Activated CD4-positive, alpha-beta T cell treated with anti-CD3 and anti-CD28 coated beads, Interleukin-2, amount 10 ng/mL, durations not matched to agents 7 days and 5 days (primary cell): ENCODE measurements at regions of chr7 and their contacts with region 1.

Region 1: GRCh38 chr7:141737834-141738591 is at the start of gene SSBP1:
- DNase-seq: peak; percentile 94
- H3K4me3 Mint-ChIP-seq: peak within 1 kb of the TSS; percentile 92
- H3K27ac Mint-ChIP-seq: peak within 1 kb of the TSS; percentile 96
- H3K4me1 Mint-ChIP-seq: peaks cover 38% of the 10 kb centered on the region
- H3K27me3 Mint-ChIP-seq: no peaks in the 10 kb centered on the region
- total RNA-seq, gene SSBP1: 109 to 127 TPM

Region 2: DNA sequence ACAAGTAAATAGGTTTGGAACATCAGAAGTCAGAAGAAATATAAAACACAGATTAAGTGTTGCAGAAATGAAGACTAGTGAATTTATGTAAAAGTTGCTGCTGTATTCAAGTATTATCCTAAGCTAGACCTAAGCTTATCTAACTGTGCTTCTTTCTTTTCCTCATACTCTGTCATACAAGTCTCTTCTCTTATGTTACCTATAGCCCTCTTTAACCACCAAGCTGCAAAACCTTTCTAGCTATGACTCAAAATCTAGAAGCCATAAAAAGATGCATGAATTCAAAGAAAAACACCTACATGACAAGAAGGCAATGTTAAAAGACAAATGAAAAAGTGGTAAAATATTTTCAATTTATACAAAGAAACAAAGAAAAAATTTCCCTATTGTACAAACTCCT is 59.0 kb before region 1 on chr7:
- CTCF ChIA-PET with region 1: interaction called, 12 read pairs
- POLR2A ChIA-PET with region 1: no interaction called
- DNase-seq: no peak
- H3K4me3 Mint-ChIP-seq: no peak overlapping the region
- H3K27ac Mint-ChIP-seq: no peak overlapping the region
- H3K4me1 Mint-ChIP-seq: peaks cover 27% of the 10 kb centered on the region
- H3K27me3 Mint-ChIP-seq: no peaks in the 10 kb centered on the region

Region 3: GRCh38 chr7:141701489-141702046 is 36.4 kb before region 1 on chr7:
- CTCF ChIA-PET with region 1: interaction called, 17 read pairs
- POLR2A ChIA-PET with region 1: interaction called, 3 read pairs
- DNase-seq: peak; percentile 83
- H3K4me3 Mint-ChIP-seq: peak overlapping the region; percentile 79
- H3K27ac Mint-ChIP-seq: peak overlapping the region; percentile 88
- H3K4me1 Mint-ChIP-seq: peaks cover 31% of the 10 kb centered on the region
- H3K27me3 Mint-ChIP-seq: peaks cover 7% of the 10 kb centered on the region

Region 4: DNA sequence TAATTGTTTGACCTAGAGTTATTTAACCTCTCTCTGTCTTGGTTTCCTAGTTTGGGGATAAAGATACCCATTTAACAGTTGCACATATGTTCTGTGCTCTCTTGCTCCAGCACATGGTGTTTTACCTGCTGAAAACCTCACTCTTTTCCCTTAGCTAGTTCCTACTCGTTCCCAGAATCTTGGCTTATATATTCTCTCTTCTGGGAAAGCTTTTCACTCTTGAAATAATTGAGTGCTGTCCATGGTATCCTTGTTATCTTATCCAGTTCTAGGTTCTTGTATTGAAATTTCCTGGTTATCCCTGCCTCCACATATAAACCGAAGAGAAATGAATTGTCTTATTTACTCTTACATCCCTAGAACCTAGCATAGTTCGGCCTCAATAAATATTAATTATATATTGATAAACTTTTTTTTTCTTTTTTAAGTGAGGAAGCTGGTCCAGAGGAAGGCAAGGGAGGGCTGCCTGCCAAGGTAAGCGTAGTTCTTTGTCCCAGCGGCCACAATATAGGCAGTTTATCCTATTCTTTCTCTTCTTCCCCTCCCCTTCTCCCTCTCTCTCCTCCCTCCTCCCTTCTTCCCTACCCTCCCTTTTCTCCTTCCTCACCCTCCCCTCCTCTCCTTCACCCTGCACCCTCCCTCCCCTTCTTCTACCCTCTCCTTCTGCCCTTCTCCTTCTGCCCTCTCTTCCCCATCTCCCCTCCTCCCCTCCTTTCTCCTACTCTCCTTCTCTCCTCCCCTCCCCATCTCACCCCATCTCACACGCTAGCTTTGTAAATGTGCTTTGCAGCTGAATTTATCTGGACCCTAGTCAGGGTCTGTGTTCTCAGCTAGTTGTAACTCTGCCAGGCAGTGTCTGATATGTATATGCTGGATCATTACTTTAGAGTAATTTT is 22.0 kb before region 1 on chr7:
- CTCF ChIA-PET with region 1: interaction called, 17 read pairs
- POLR2A ChIA-PET with region 1: no interaction called
- DNase-seq: no peak
- H3K4me3 Mint-ChIP-seq: no peak overlapping the region
- H3K27ac Mint-ChIP-seq: no peak overlapping the region
- H3K4me1 Mint-ChIP-seq: peaks cover 14% of the 10 kb centered on the region
- H3K27me3 Mint-ChIP-seq: no peaks in the 10 kb centered on the region

Region 5: GRCh38 chr7:141722529-141722928 is 15.5 kb before region 1 on chr7:
- CTCF ChIA-PET with region 1: interaction called, 12 read pairs
- POLR2A ChIA-PET with region 1: interaction called, 3 read pairs
- DNase-seq: no peak
- H3K4me3 Mint-ChIP-seq: no peak overlapping the region
- H3K27ac Mint-ChIP-seq: no peak overlapping the region
- H3K4me1 Mint-ChIP-seq: peaks cover 2% of the 10 kb centered on the region
- H3K27me3 Mint-ChIP-seq: no peaks in the 10 kb centered on the region